ENCODE measurements at regions of chr16 and their contacts with region 1.

Region 1: GRCh38 chr16:56625140-56625942 is at the start of gene MT1E:
- DNase-seq: no peak
- H3K4me3 ChIP-seq: peak within 1 kb of the TSS; percentile 73
- H3K27ac ChIP-seq: peak within 1 kb of the TSS; percentile 78
- H3K27me3 ChIP-seq: no peaks in the 10 kb centered on the region
- CTCF ChIP-seq: no peak
- polyA plus RNA-seq, gene MT1E: 153 and 250 TPM in 2 replicates

Region 2: DNA sequence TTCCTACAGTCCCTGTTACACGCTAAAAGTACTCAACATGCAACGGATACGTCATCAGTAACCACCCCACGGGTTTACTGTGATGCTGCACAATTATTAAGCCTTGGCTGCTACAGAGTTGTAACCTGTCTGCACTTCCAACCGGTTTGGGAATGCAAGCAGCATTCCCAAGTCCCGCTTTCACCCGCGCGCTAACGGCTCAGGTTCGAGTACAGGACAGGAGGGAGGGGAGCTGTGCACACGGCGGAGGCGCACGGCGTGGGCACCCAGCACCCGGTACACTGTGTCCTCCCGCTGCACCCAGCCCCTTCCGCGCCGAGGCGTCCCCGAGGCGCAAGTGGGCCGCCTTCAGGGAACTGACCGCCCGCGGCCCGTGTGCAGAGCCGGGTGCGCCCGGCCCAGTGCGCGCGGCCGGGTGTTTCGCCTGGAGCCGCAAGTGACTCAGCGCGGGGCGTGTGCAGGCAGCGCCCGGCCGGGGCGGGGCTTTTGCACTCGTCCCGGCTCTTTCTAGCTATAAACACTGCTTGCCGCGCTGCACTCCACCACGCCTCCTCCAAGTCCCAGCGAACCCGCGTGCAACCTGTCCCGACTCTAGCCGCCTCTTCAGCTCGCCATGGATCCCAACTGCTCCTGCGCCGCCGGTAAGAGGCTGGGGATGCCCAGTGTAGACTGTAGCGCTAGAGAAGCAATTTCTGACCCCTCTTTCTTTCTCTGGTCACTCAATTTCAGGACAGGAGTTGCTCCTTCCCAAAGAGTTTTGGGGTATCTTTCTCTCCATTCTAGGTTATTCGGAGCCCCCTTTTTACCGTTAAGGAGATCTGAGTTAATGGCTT is 17.1 kb before region 1 on chr16 and contains the start of gene MT2A:
- CTCF ChIA-PET with region 1: interaction called, 4 read pairs
- POLR2A ChIA-PET with region 1: interaction called, 201 read pairs
- DNase-seq: peak; percentile 86
- H3K4me3 ChIP-seq: peak within 1 kb of the TSS; percentile 89
- H3K27ac ChIP-seq: peak within 1 kb of the TSS; percentile 99
- H3K27me3 ChIP-seq: no peaks in the 10 kb centered on the region
- CTCF ChIP-seq: no peak
- polyA plus RNA-seq, gene MT2A: 82.6 and 146 TPM in 2 replicates

Region 3: GRCh38 chr16:56635441-56635967 is 10.2 kb after region 1 on chr16:
- CTCF ChIA-PET with region 1: no interaction called
- POLR2A ChIA-PET with region 1: interaction called, 12 read pairs
- DNase-seq: no peak
- H3K4me3 ChIP-seq: peak overlapping the region; percentile 38; the same call in 1 of the 2 replicates
- H3K27ac ChIP-seq: no peak overlapping the region
- H3K27me3 ChIP-seq: peaks cover 80% of the 10 kb centered on the region
- CTCF ChIP-seq: no peak

Region 4: GRCh38 chr16:56681939-56682702 is 56.8 kb after region 1 on chr16 and contains the start of gene MT1X:
- CTCF ChIA-PET with region 1: interaction called, 3 read pairs
- POLR2A ChIA-PET with region 1: interaction called, 18 read pairs
- DNase-seq: peak; percentile 59
- H3K4me3 ChIP-seq: peak within 1 kb of the TSS; percentile 77
- H3K27ac ChIP-seq: no peak within 1 kb of the TSS
- H3K27me3 ChIP-seq: peaks cover 2% of the 10 kb centered on the region
- CTCF ChIP-seq: no peak
- polyA plus RNA-seq, gene MT1X: 19.5 and 30.1 TPM in 2 replicates

Measured in AG04450 (cell line).